Activated B cell treated with CpG ODN at 0.5 μM for 24 hours (primary cell): ENCODE measurements at regions of chr3 and their contacts with region 1.

Region 1: GRCh38 chr3:111978493-111979433 is at the start of gene ABHD10:
- DNase-seq: peak; percentile 90
- ATAC-seq: peak; percentile 94
- H3K4me3 Mint-ChIP-seq: peak within 1 kb of the TSS; percentile 93
- H3K27ac Mint-ChIP-seq: peak within 1 kb of the TSS; percentile 94
- H3K4me1 Mint-ChIP-seq: peaks cover 43% of the 10 kb centered on the region
- H3K27me3 Mint-ChIP-seq: no peaks in the 10 kb centered on the region
- CTCF ChIP-seq: no peak
- total RNA-seq, gene ABHD10: 25.2 and 28.4 TPM in 2 replicates

Region 2: DNA sequence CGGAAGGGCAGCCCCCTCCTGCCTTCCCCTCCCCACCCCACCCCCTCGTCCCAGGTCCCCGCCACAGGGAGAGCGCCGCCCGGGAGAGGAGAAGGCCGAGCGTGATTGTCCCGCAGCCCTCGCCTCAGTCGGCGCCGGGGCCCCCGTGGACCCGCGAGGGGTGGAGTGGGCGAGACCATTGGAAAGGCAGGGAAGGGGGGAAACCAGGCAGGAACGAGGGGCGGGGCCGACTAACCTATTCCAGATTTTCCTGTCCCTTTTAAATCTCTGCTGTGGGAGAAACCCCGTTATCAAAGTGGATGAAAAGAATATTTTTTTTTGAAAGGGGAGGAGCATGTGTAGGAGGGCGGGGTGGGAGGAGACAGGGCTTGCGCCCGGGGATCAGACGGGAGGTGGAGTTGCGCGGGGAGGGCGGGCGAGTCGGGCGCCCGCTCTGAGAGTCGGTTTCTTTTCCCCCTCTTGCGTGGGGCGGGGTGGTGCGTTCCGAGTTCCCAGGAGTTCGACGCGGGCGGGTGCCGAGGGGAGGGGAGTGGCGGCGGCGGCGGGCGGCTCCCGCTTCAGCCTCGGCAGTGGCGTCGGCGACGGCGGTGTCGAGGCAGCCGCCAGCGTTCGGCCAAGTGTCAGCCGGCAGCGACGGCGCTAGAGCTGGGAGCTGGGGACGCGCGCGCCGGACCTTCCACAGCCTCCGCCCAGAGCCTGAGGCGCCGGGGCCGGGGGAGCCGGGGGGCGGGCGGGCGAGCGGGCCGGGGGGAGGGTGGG is 907.3 kb before region 1 on chr3 and contains the start of gene NECTIN3:
- CTCF ChIA-PET with region 1: no interaction called
- POLR2A ChIA-PET with region 1: no interaction called
- intact Hi-C with region 1: loop called (anchors 5 kb)
- DNase-seq: peak; percentile 53
- ATAC-seq: peak; percentile 92
- H3K4me3 Mint-ChIP-seq: peak within 1 kb of the TSS; percentile 90
- H3K27ac Mint-ChIP-seq: no peak within 1 kb of the TSS
- H3K4me1 Mint-ChIP-seq: peaks cover 29% of the 10 kb centered on the region
- H3K27me3 Mint-ChIP-seq: peaks cover 46% of the 10 kb centered on the region
- CTCF ChIP-seq: no peak
- total RNA-seq, gene NECTIN3: 0.71 and 0.78 TPM in 2 replicates

Region 3: GRCh38 chr3:111859974-111860859 is 118.5 kb before region 1 on chr3:
- CTCF ChIA-PET with region 1: interaction called, 4 read pairs
- POLR2A ChIA-PET with region 1: interaction called, 6 read pairs
- intact Hi-C with region 1: loop called (anchors 1 kb)
- DNase-seq: peak; percentile 52
- ATAC-seq: peak; percentile 80
- H3K4me3 Mint-ChIP-seq: peak overlapping the region; percentile 91
- H3K27ac Mint-ChIP-seq: peak overlapping the region; percentile 87
- H3K4me1 Mint-ChIP-seq: peaks cover 18% of the 10 kb centered on the region
- H3K27me3 Mint-ChIP-seq: peaks cover 9% of the 10 kb centered on the region
- CTCF ChIP-seq: no peak

Region 4: DNA sequence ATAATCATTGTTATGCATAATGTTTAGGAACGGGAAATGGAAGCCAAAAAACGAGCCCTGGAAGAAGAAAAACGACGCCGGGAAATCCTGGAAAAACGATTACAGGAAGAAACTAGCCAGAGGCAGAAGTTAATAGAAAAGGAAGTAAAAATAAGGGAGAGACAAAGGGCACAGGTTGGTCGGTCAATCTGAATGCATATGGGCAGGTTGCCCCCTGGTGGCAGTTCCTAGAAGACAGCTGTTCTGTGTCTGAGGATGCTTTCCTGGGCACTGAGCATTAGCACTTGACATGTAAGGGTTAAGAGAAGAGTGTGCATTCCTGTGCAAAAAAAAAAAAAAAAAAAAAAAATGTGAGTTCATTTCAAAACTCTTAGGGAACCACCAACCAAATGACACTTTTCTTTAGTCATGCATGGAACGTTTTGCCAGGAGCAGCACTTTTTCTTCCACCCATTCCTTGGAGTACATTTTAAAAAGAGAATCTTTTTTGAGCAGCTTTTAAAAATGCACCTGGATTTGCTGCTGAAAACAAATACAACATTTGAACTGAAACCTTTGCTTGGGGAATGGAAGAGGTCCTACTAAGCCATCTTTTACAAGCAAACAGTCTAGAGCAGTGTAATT is 11.0 kb before region 1 on chr3:
- CTCF ChIA-PET with region 1: interaction called, 15 read pairs
- POLR2A ChIA-PET with region 1: interaction called, 9 read pairs
- intact Hi-C with region 1: no loop called
- DNase-seq: peak; percentile 39
- ATAC-seq: peak; percentile 90
- H3K4me3 Mint-ChIP-seq: peak overlapping the region; percentile 4
- H3K27ac Mint-ChIP-seq: no peak overlapping the region
- H3K4me1 Mint-ChIP-seq: peaks cover 5% of the 10 kb centered on the region
- H3K27me3 Mint-ChIP-seq: no peaks in the 10 kb centered on the region
- CTCF ChIP-seq: peak; percentile 97

Region 5: DNA sequence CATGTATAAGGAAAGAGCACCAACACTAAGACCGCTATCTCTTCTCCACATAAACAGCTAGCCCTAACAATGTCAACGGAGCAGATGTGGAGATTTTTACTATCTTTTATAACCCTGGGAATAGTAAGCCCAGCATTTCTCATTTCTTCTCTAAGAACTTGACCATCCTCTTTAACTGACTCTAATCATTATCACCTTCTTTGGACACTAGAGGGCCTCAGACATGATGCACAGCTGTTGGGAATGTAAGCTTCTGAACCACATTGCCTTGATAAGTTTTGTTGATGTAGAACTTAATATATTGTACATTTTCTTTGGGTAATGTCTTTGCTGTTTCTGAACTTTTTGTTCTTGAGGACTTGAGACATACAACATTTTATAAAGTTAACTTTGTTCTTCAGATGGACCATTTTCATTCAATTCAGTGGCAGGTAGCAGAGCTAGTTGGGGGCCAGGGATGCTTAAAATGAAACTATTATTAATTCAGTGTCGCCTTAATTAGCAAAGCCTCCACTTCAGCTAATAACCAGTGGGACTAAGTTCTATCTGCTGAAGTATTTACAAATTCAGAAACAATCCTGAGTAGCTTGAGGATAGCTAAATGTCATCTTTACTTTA is 10.4 kb after region 1 on chr3:
- CTCF ChIA-PET with region 1: interaction called, 17 read pairs
- POLR2A ChIA-PET with region 1: interaction called, 5 read pairs
- intact Hi-C with region 1: loop called (anchors 1 kb)
- DNase-seq: no peak
- ATAC-seq: peak; percentile 74
- H3K4me3 Mint-ChIP-seq: no peak overlapping the region
- H3K27ac Mint-ChIP-seq: no peak overlapping the region
- H3K4me1 Mint-ChIP-seq: peaks cover 12% of the 10 kb centered on the region
- H3K27me3 Mint-ChIP-seq: no peaks in the 10 kb centered on the region
- CTCF ChIP-seq: peak; percentile 37

Region 6: GRCh38 chr3:112027826-112028225 is 49.1 kb after region 1 on chr3:
- CTCF ChIA-PET with region 1: no interaction called
- POLR2A ChIA-PET with region 1: no interaction called
- intact Hi-C with region 1: no loop called
- DNase-seq: no peak
- ATAC-seq: no peak
- H3K4me3 Mint-ChIP-seq: no peak overlapping the region
- H3K27ac Mint-ChIP-seq: no peak overlapping the region
- H3K4me1 Mint-ChIP-seq: no peaks in the 10 kb centered on the region
- H3K27me3 Mint-ChIP-seq: no peaks in the 10 kb centered on the region
- CTCF ChIP-seq: no peak